ENCODE measurements at regions of chr20 and their contacts with region 1.

Region 1: GRCh38 chr20:35443003-35443402 is 5.0 kb upstream of the GDF5 start:
- DNase-seq: no peak
- ATAC-seq: no peak

Region 2: GRCh38 chr20:35306931-35307517 is 136.0 kb before region 1 on chr20:
- intact Hi-C with region 1: loop called (anchors 5 kb)
- DNase-seq: no peak
- ATAC-seq: peak; percentile 65

Region 3: GRCh38 chr20:35363190-35363589 is 79.8 kb before region 1 on chr20:
- intact Hi-C with region 1: no loop called
- DNase-seq: no peak
- ATAC-seq: no peak

Measured in sciatic nerve (tissue), 2 donors.